BJ (cell line): ENCODE measurements at regions of chr3 and their contacts with region 1.

Region 1: DNA sequence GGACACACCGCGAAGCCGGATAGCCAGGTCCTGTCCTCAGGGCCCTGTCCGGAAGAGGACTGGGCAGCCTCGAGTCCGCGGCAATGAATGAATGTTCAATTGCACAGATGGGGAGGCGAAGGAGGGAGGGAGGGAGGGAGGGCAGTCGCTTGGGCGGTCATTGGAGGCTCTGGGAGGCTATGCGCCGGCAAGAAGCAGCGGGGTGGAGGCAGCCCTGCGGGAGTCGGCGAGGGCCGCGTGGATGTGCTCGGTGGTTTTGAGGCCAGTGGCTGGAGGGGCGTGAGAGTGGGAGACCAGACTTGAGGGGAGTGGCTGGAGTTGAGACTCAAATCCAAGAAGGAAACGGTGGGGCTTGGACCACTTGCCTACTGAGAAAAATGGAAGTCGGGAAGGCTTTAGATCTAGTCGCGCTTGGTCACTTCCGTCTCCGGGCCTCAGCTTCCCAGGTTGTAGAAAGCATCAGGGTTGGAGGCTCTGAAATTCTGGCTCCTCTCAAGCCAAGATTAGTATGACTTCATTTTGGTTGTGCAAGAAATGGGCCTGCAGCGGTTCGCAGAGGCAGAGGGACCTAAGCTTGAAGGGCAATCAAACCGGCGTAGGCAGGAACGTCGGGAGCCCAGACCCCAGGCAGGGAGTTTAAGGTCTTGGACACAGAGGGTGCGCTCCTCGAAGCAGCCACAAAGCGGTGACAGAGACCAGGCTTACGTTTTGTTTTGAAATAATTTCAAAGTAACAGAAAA is 21.1 kb upstream of the PLXND1 start:
- DNase-seq: peak; percentile 40
- H3K4me3 ChIP-seq: peak overlapping the region; percentile 38
- H3K27me3 ChIP-seq: no peaks in the 10 kb centered on the region
- CTCF ChIP-seq: peak; percentile 79

Region 2: GRCh38 chr3:129490242-129491045 is 137.2 kb before region 1 on chr3:
- CTCF ChIA-PET with region 1: interaction called, 15 read pairs
- POLR2A ChIA-PET with region 1: interaction called, 3 read pairs
- DNase-seq: peak; percentile 74
- H3K4me3 ChIP-seq: no peak overlapping the region
- H3K27me3 ChIP-seq: no peaks in the 10 kb centered on the region
- CTCF ChIP-seq: peak; percentile 92

Region 3: DNA sequence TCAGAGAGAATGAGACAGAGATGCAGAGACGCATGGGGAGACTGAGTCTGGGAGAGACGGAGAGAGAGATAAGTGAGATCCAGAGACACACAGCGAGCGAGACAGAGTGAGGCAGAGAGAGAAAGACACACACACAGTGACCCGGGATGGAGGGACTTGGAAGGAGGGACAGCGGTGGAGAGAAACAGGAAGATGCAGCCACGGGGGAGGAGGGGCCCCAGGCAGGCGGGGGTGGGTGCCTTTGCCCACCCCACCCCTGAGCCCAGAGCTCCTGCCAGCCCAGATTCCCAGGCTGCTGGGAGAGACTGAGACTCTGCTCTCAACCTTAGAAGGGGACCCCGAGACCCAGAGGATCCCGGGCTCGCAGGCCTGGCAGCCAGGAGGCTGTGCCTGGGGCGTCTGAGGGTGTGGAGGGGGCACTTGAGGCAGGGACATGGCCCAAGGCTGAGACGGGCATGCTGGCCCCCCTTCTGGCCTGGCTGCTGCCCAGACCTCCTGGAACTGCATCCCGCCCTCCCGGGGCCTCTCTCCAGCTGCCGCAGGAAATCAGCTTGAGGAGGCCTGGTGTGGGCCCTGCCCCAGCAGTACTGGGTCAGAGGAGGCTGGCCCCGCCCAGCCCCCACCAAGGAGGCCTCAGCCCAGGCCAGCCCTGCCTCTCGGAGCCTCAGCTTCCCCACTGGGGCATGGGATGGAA is 66.6 kb before region 1 on chr3:
- CTCF ChIA-PET with region 1: no interaction called
- POLR2A ChIA-PET with region 1: interaction called, 11 read pairs
- DNase-seq: peak; percentile 68
- H3K4me3 ChIP-seq: peak overlapping the region; percentile 29
- H3K27me3 ChIP-seq: no peaks in the 10 kb centered on the region
- CTCF ChIP-seq: no peak

Region 4: DNA sequence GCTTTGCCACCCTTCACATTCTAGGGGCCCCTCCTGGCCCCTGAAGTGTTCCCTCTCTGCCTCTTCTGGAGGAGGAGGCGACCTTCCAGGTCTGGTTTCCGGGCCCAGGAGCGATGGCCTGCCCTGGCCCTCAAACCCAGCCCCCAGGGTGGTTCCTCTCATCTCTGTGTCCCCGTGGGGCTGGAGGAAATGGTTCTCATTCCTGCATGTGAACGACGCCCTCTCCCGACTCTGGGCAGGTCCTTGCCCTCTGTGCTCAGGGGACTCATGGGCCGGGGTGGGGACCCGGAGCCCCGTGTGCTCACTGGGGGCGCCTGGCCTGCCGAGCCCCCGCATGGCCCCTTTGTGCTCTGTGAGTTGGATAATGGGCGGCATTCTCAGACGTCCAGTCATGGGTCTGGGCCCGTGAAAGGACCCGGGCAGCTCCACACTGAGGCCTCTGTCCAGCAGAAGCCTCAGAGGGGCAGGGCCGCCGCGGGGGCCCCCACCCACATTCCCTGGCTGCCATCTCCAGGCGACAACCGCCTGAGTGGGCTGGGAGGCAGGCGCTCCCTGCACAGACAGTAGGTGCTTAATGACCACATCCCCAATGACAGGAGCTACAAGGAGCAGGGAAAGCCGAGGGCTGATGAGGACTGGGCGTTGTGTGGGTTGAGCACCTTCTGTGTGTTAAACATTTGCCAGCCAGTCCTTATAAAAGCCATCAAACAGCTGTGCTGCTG is 15.6 kb before region 1 on chr3:
- CTCF ChIA-PET with region 1: interaction called, 4 read pairs
- POLR2A ChIA-PET with region 1: interaction called, 20 read pairs
- DNase-seq: no peak
- H3K4me3 ChIP-seq: no peak overlapping the region
- H3K27me3 ChIP-seq: no peaks in the 10 kb centered on the region
- CTCF ChIP-seq: peak; percentile 30; the same call in 1 of the 2 replicates

Region 5: DNA sequence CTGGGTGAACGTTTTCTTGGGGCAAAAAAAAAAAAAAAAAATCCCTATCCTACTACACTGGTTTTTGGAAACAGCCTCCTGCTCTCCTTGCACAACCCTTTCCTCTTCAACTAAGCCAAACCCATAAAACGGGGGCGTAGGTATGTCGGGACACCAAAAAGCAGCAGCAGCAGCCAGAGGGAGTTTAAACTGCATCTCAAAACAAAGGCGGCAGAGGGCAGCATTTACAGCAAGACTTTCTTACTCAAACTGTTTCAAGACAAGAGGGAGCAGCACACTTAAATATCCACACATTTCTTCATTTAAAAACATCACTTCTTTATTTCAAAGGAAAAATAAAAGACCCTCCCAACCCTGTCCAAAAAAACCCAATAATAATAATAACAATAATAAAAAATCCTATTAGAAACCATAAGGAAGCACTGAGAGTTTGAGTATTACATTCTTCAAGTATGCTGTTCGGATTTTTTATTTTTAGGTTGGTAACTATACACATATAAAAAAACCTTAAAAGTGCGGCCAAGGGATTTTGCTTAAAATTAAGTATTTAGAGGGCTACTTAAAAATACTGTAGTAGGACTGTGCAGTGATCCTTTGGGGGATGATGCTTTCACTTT is 22.8 kb after region 1 on chr3:
- CTCF ChIA-PET with region 1: interaction called, 13 read pairs
- POLR2A ChIA-PET with region 1: no interaction called
- DNase-seq: peak; percentile 80
- H3K4me3 ChIP-seq: no peak overlapping the region
- H3K27me3 ChIP-seq: no peaks in the 10 kb centered on the region; the same call in 1 of the 2 replicates
- CTCF ChIP-seq: peak; percentile 71

Region 6: GRCh38 chr3:129824926-129825541 is 197.4 kb after region 1 on chr3:
- CTCF ChIA-PET with region 1: interaction called, 22 read pairs
- POLR2A ChIA-PET with region 1: no interaction called
- DNase-seq: no peak
- H3K4me3 ChIP-seq: no peak overlapping the region
- H3K27me3 ChIP-seq: no peaks in the 10 kb centered on the region
- CTCF ChIP-seq: peak; percentile 59

Region 7: GRCh38 chr3:129934234-129935123 is 306.9 kb after region 1 on chr3:
- CTCF ChIA-PET with region 1: interaction called, 16 read pairs
- POLR2A ChIA-PET with region 1: no interaction called
- DNase-seq: no peak
- H3K4me3 ChIP-seq: no peak overlapping the region
- H3K27me3 ChIP-seq: 0 out of 2 replicates have a peak, but pooled peaks cover 1% of the 10 kb centered on the region
- CTCF ChIP-seq: peak; percentile 85